Activated T-helper 1 cell treated with anti-CD3 and anti-CD28 coated beads, Interleukin-12 subunit alpha, Interleukin-12 subunit beta, Interleukin-2, Interleukin-4 antibody, amounts not matched to agents 30 ng/mL and 10 ng/mL and 1 ng/mL, durations not matched to agents 14 hours and 24 hours and 36 hours (primary cell): ENCODE measurements at regions of chr14 and their contacts with region 1.

Region 1: DNA sequence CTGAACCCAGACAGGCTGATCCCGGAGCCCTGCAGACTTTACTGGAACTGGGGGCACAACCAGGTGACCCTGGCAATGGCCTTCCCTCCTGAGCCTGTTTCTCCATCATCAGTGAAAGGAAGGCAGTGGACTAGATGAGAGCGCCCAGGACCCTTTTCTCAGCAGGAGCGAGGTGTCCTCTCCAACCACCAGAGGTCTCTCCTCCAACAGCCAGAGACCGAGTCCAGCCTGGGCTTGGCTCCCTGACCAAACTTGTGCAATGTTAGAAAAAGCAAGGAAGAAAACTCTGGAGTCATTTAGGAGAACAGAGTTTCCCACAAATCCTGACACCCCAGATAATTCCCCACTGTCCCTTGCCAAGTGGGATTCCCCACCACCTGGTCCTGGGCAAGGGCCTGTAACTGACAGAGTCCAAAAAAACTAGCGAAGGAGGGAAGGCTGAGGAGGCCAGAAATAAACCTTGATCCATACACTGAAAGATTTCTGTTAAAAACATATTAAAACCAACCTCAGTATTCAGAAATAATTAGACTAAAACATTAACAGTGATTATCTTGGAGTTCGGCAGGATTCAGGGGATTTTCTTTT is 9.0 kb downstream of the RPS6KL1 start:
- DNase-seq: no peak
- H3K4me3 Mint-ChIP-seq: no peak overlapping the region
- H3K27ac Mint-ChIP-seq: no peak overlapping the region
- H3K4me1 Mint-ChIP-seq: no peaks in the 10 kb centered on the region
- H3K27me3 Mint-ChIP-seq: no peaks in the 10 kb centered on the region

Region 2: GRCh38 chr14:74824997-74825396 is 89.1 kb before region 1 on chr14:
- intact Hi-C with region 1: no loop called
- DNase-seq: no peak
- H3K4me3 Mint-ChIP-seq: no peak overlapping the region
- H3K27ac Mint-ChIP-seq: no peak overlapping the region
- H3K4me1 Mint-ChIP-seq: no peaks in the 10 kb centered on the region
- H3K27me3 Mint-ChIP-seq: no peaks in the 10 kb centered on the region

Region 3: DNA sequence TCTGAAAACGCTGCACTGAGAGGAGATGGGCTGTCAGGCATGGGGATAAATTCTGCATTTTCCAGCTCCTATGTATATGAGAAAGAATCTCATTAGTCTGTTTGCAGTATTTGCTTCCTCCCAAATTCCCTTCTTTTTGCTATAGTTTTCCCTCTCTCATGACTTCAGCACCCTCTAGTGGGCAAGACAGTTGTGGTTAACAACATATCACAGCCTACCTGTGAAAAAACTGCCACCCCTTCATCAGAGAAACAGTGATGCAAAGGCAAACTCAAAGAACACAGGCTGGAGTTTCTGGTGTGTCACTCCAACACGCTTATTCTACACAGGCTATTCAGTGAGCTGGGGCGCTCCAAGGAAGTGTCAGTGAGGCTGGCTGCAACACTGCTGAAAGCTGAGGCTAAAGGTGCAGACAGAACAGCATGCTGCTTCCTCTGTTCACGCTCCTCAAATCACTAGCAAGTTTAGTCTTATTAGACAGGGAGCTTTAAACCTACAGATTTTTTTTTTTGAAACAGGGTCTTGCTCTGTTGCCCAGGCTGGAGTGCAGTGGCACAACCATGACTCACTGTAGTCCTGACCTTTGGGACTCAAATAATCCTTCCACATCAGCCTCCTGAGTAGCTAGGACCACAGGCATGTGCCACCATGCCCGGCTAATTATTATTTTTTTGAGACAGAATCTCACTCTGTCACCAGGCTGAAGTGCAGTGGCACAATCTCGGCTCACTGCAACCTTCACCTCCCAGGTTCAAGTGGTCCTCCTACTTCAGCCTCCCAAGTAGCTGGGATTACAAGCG is 174.7 kb after region 1 on chr14:
- intact Hi-C with region 1: loop called (anchors 1 kb)
- DNase-seq: peak; percentile 30
- H3K4me3 Mint-ChIP-seq: no peak overlapping the region
- H3K27ac Mint-ChIP-seq: no peak overlapping the region
- H3K4me1 Mint-ChIP-seq: no peaks in the 10 kb centered on the region
- H3K27me3 Mint-ChIP-seq: no peaks in the 10 kb centered on the region